Naive thymus-derived CD4-positive, alpha-beta T cell (primary cell): ENCODE measurements at regions of chr20 and their contacts with region 1.

Region 1: GRCh38 chr20:45934586-45935415 is at the start of gene PCIF1:
- DNase-seq: peak; percentile 98 to 99 (median 99)
- ATAC-seq: peak; percentile 87
- H3K4me3 ChIP-seq: peak within 1 kb of the TSS; percentile 96
- H3K4me3 Mint-ChIP-seq: peak within 1 kb of the TSS; percentile 85 to 99 (median 98)
- H3K27ac ChIP-seq: peak within 1 kb of the TSS; percentile 96
- H3K27ac Mint-ChIP-seq: peak within 1 kb of the TSS; percentile 95 to 99 (median 98)
- H3K4me1 ChIP-seq: peaks cover 10 to 21% of the 10 kb centered on the region in 2 donors
- H3K4me1 Mint-ChIP-seq: peaks cover 8 to 37% (median 33%) of the 10 kb centered on the region in 7 donors
- H3K27me3 ChIP-seq: no peaks in the 10 kb centered on the region
- H3K27me3 Mint-ChIP-seq: no peaks in the 10 kb centered on the region
- total RNA-seq, gene PCIF1: 42.3 to 79.6 (median 67.0) TPM

Region 2: GRCh38 chr20:45792332-45792686 is 142.5 kb before region 1 on chr20:
- CTCF ChIA-PET with region 1: no interaction called
- POLR2A ChIA-PET with region 1: interaction called, 6 read pairs
- intact Hi-C with region 1: loop called (anchors 1 to 10 kb)
- DNase-seq: peak in 1 of 9 donors; percentile 9
- ATAC-seq: peak; percentile 39
- H3K4me3 ChIP-seq: peak overlapping the region; percentile 70
- H3K4me3 Mint-ChIP-seq: peak overlapping the region; percentile 85 to 99 (median 92)
- H3K27ac ChIP-seq: peak overlapping the region; percentile 96
- H3K27ac Mint-ChIP-seq: peak overlapping the region; percentile 87 to 99 (median 93)
- H3K4me1 ChIP-seq: peaks cover 5 to 10% of the 10 kb centered on the region in 2 donors
- H3K4me1 Mint-ChIP-seq: peaks cover 13 to 28% (median 20%) of the 10 kb centered on the region in 7 donors
- H3K27me3 ChIP-seq: no peaks in the 10 kb centered on the region
- H3K27me3 Mint-ChIP-seq: peaks cover 0 to 5% (median 0%) of the 10 kb centered on the region in 5 donors

Region 3: DNA sequence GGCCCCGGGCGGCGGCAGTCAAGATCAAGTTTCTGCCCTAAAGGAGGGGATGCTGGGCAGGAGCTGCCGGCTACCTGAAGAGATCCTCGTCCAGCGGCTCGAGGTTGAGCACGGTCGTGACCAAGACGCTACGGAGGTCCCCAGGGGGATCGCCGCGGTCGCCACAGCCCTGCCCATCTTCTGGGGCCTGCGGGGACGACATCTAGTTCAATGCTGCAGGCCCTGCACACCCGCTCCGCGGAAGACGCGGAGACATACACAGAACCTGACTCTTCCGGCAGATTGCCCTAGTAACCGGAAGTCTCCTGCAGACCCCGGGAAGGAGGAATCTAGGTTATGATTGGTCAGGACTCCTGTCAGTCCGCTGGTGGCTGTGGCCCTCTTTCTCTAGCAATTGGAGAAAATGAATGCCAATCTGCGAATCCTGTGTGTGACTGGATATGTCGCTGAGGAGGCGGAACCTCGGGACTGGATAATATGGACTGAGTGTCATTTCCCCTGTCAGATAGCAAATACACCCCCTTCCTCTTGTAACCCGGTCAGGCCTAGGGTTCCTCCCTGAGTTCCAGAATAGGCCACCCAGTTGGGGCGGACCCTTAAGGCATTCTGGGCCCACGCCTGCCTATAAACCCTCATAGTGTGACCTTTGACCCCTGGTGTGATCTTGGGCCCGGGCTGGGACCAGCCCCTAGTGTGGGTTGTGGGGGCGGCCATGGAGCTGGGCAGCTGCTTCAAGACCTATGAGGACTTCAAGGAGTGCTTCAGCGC is 77.5 kb before region 1 on chr20 and contains the starts of genes ACOT8 and ZSWIM3:
- CTCF ChIA-PET with region 1: no interaction called
- POLR2A ChIA-PET with region 1: interaction called, 35 read pairs
- intact Hi-C with region 1: loop called (anchors 1 kb)
- DNase-seq: peak; percentile 62 to 100 (median 97)
- ATAC-seq: peak; percentile 99
- H3K4me3 ChIP-seq: peak within 1 kb of the TSS; percentile 94
- H3K4me3 Mint-ChIP-seq: peak within 1 kb of the TSS; percentile 95 to 98 (median 96)
- H3K27ac ChIP-seq: peak within 1 kb of the TSS; percentile 95
- H3K27ac Mint-ChIP-seq: peak within 1 kb of the TSS; percentile 96 to 99 (median 98)
- H3K4me1 ChIP-seq: peaks cover 16 to 26% of the 10 kb centered on the region in 2 donors
- H3K4me1 Mint-ChIP-seq: peaks cover 23 to 76% (median 63%) of the 10 kb centered on the region in 7 donors
- H3K27me3 ChIP-seq: no peaks in the 10 kb centered on the region
- H3K27me3 Mint-ChIP-seq: no peaks in the 10 kb centered on the region
- total RNA-seq, gene ACOT8: 20.5 to 35.5 (median 29.2) TPM
- total RNA-seq, gene ZSWIM3: 1.3 to 6.8 (median 6.0) TPM

Region 4: DNA sequence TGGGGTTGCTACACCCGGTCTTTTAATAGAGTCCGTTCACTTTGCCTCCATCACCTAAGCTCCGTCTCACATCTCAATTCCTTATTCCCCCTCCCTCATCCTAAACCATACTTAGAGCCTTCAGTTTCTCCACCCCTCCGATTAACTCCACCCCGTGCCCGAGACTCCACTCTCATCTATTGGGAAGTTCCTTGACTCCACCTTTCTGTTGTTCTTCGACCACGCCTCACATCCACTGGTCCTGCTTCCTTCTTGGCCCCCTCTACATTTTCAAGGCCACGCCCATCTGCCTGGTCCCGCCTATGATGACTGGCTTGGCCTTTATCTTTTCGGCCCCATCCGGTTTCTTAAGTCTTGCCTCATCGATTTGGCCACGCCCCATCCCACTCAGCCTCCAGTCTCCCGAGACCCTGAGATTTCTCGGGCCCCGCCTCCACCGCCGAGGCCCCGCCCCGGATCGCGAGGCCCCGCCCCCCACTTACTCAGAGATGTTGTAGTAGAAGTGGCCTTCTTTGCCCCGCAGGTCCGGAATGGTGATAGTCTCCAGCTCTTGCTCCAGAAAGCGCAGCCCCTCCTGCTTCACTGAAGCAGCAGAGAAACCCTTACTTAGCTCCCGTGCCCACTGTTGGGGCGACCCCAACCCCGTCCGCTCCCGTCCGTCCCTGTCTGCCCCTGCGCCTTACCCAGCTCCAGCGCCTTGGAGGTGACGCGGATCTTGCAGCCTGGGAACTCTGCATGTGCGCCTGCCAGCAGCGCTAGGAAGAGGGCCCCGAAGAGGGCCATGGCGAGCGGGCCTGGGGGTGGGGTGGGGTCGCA is 23.9 kb before region 1 on chr20:
- CTCF ChIA-PET with region 1: no interaction called
- POLR2A ChIA-PET with region 1: interaction called, 18 read pairs
- intact Hi-C with region 1: loop called (anchors 1 kb)
- DNase-seq: peak; percentile 54 to 93 (median 67)
- ATAC-seq: peak; percentile 93
- H3K4me3 ChIP-seq: peak overlapping the region; percentile 76
- H3K4me3 Mint-ChIP-seq: peak overlapping the region; percentile 59 to 84 (median 80)
- H3K27ac ChIP-seq: peak overlapping the region; percentile 2
- H3K27ac Mint-ChIP-seq: peak overlapping the region in 5 of 9 donors; percentile 25 to 67 (median 46)
- H3K4me1 ChIP-seq: peaks cover 13 to 17% of the 10 kb centered on the region in 2 donors
- H3K4me1 Mint-ChIP-seq: peaks cover 0 to 21% (median 16%) of the 10 kb centered on the region in 7 donors
- H3K27me3 ChIP-seq: no peaks in the 10 kb centered on the region
- H3K27me3 Mint-ChIP-seq: peaks cover 6 to 18% (median 10%) of the 10 kb centered on the region in 5 donors

Region 5: GRCh38 chr20:45953672-45954071 is 18.9 kb after region 1 on chr20:
- CTCF ChIA-PET with region 1: no interaction called
- POLR2A ChIA-PET with region 1: interaction called, 55 read pairs
- intact Hi-C with region 1: no loop called
- DNase-seq: no peak
- ATAC-seq: no peak
- H3K4me3 ChIP-seq: no peak overlapping the region
- H3K4me3 Mint-ChIP-seq: no peak overlapping the region
- H3K27ac ChIP-seq: no peak overlapping the region
- H3K27ac Mint-ChIP-seq: peak overlapping the region in 4 of 9 donors; percentile 23 to 63 (median 58)
- H3K4me1 ChIP-seq: no peaks in the 10 kb centered on the region
- H3K4me1 Mint-ChIP-seq: peaks cover 0 to 5% (median 0%) of the 10 kb centered on the region in 7 donors
- H3K27me3 ChIP-seq: no peaks in the 10 kb centered on the region
- H3K27me3 Mint-ChIP-seq: no peaks in the 10 kb centered on the region

Region 6: DNA sequence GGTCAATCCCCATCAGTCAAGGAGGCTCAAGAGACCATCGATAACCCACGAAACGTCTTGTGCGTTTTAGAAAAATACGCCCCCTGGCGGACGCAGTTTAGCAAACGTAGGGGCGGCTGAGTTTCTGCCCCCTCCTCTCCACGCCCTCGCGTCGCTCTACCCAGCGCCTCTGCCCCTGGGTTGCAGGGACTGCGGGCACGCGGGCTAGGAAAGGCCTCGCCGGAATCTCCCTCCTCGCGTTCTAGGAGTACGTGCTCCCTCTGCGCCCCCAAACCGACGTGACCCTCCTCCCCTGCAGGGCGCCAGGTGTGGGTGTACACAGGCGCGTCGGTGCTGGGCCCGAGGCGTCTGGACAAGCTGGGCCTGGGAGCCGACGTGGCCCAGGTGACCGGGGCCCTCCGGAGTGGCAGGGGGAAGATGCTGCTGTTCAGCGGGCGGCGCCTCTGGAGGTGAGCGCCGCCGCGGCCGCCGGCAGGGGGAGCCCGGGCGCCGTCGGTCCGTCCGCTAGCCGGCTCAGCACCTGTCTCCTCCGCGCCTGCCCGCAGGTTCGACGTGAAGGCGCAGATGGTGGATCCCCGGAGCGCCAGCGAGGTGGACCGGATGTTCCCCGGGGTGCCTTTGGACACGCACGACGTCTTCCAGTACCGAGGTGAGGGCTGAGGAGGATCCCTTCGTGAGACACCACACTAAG is 79.2 kb after region 1 on chr20:
- CTCF ChIA-PET with region 1: interaction called, 3 read pairs
- POLR2A ChIA-PET with region 1: interaction called, 3 read pairs
- intact Hi-C with region 1: loop called in 1 of 2 experiments (anchors 1 kb)
- DNase-seq: peak; percentile 39 to 73 (median 60)
- ATAC-seq: peak; percentile 76
- H3K4me3 ChIP-seq: peak overlapping the region; percentile 32
- H3K4me3 Mint-ChIP-seq: peak overlapping the region; percentile 23 to 76 (median 58)
- H3K27ac ChIP-seq: no peak overlapping the region
- H3K27ac Mint-ChIP-seq: peak overlapping the region in 3 of 9 donors; percentile 1 to 43 (median 29)
- H3K4me1 ChIP-seq: peaks cover 24 to 27% of the 10 kb centered on the region in 2 donors
- H3K4me1 Mint-ChIP-seq: peaks cover 38 to 61% (median 48%) of the 10 kb centered on the region in 7 donors
- H3K27me3 ChIP-seq: peaks cover 15 to 16% of the 10 kb centered on the region in 2 donors
- H3K27me3 Mint-ChIP-seq: peaks cover 52 to 68% (median 55%) of the 10 kb centered on the region in 5 donors

Region 7: GRCh38 chr20:46406199-46406985 is 471.6 kb after region 1 on chr20 and contains the start of gene ELMO2:
- CTCF ChIA-PET with region 1: no interaction called
- POLR2A ChIA-PET with region 1: interaction called, 6 read pairs
- intact Hi-C with region 1: loop called in 1 of 2 experiments (anchors 1 kb)
- DNase-seq: peak; percentile 81 to 97 (median 94)
- ATAC-seq: peak; percentile 95
- H3K4me3 ChIP-seq: peak within 1 kb of the TSS; percentile 86
- H3K4me3 Mint-ChIP-seq: peak within 1 kb of the TSS; percentile 88 to 97 (median 95)
- H3K27ac ChIP-seq: peak within 1 kb of the TSS; percentile 97
- H3K27ac Mint-ChIP-seq: peak within 1 kb of the TSS; percentile 88 to 97 (median 93)
- H3K4me1 ChIP-seq: peaks cover 38 to 50% of the 10 kb centered on the region in 2 donors
- H3K4me1 Mint-ChIP-seq: peaks cover 44 to 78% (median 70%) of the 10 kb centered on the region in 7 donors
- H3K27me3 ChIP-seq: no peaks in the 10 kb centered on the region
- H3K27me3 Mint-ChIP-seq: peaks cover 0 to 3% (median 0%) of the 10 kb centered on the region in 5 donors
- total RNA-seq, gene ELMO2: 50.8 to 104 (median 52.3) TPM